Activated naive CD4-positive, alpha-beta T cell treated with anti-CD3 and anti-CD28 coated beads, Interleukin-2, amount 10 ng/mL, durations not matched to agents 7 days and 5 days (primary cell): ENCODE measurements at regions of chr4 and their contacts with region 1.

Region 1: GRCh38 chr4:122577808-122578781 is 42.8 kb downstream of the IL21 start:
- DNase-seq: peak; percentile 83
- H3K4me3 Mint-ChIP-seq: peak overlapping the region; percentile 60
- H3K27ac Mint-ChIP-seq: peak overlapping the region; percentile 94
- H3K4me1 Mint-ChIP-seq: peaks cover 58% of the 10 kb centered on the region
- H3K27me3 Mint-ChIP-seq: peaks cover 4% of the 10 kb centered on the region

Region 2: GRCh38 chr4:121950212-121950679 is 627.8 kb before region 1 on chr4:
- CTCF ChIA-PET with region 1: interaction called, 13 read pairs
- DNase-seq: peak; percentile 91
- H3K4me3 Mint-ChIP-seq: peak overlapping the region; percentile 80
- H3K27ac Mint-ChIP-seq: peak overlapping the region; percentile 58
- H3K4me1 Mint-ChIP-seq: peaks cover 24% of the 10 kb centered on the region
- H3K27me3 Mint-ChIP-seq: peaks cover 60% of the 10 kb centered on the region

Region 3: GRCh38 chr4:122453384-122453995 is 124.6 kb before region 1 on chr4:
- CTCF ChIA-PET with region 1: interaction called, 29 read pairs
- DNase-seq: no peak
- H3K4me3 Mint-ChIP-seq: peak overlapping the region; percentile 22
- H3K27ac Mint-ChIP-seq: peak overlapping the region; percentile 71
- H3K4me1 Mint-ChIP-seq: peaks cover 63% of the 10 kb centered on the region
- H3K27me3 Mint-ChIP-seq: no peaks in the 10 kb centered on the region

Region 4: DNA sequence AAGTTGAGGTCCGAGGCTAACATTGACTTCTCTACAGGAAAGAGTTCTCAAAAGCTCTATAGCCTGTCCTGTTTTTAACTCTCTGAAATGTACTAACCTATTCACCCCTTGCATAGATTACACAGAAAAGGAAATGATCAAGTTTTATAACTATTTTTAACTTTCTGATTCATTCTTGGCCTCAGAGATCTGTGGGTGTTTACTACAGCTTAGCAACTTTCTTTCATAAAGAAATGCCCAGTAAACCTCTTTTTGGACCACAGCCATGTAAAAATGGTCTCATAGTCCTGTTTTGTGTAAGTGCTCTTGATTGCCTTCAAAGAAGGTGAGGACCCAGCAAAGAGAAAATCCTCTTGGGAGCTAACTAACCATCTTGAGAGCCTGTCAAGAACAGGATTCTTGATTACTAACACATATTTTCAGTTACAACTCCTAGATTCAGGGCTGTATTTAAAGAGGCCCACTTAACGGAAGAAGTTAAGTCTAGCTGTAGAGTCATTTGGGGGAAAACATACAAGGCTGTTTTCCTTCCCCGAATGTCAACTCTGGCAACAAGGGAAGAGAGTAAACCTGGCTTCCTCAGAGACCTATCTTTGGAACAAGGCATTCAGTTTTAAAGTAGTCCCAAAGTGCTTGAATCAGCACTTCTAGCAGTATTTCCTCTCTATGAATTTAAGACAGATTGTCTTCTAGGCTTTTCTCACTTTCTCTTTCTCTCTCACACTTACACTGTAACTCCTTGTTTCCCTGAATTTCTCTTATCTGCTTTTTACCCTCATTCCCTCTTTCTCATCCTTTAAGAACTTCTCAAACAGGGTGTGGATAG is 35.5 kb before region 1 on chr4:
- CTCF ChIA-PET with region 1: interaction called, 11 read pairs
- DNase-seq: no peak
- H3K4me3 Mint-ChIP-seq: peak overlapping the region; percentile 4
- H3K27ac Mint-ChIP-seq: peak overlapping the region; percentile 89
- H3K4me1 Mint-ChIP-seq: peaks cover 54% of the 10 kb centered on the region
- H3K27me3 Mint-ChIP-seq: no peaks in the 10 kb centered on the region

Region 5: GRCh38 chr4:122716825-122717448 is 138.8 kb after region 1 on chr4:
- CTCF ChIA-PET with region 1: interaction called, 25 read pairs
- DNase-seq: peak; percentile 84
- H3K4me3 Mint-ChIP-seq: no peak overlapping the region
- H3K27ac Mint-ChIP-seq: no peak overlapping the region
- H3K4me1 Mint-ChIP-seq: peaks cover 33% of the 10 kb centered on the region
- H3K27me3 Mint-ChIP-seq: peaks cover 8% of the 10 kb centered on the region

Region 6: GRCh38 chr4:123304151-123304964 is 726.3 kb after region 1 on chr4:
- CTCF ChIA-PET with region 1: no interaction called
- DNase-seq: peak; percentile 21
- H3K4me3 Mint-ChIP-seq: no peak overlapping the region
- H3K27ac Mint-ChIP-seq: no peak overlapping the region
- H3K4me1 Mint-ChIP-seq: no peaks in the 10 kb centered on the region
- H3K27me3 Mint-ChIP-seq: no peaks in the 10 kb centered on the region